Activated naive CD4-positive, alpha-beta T cell treated with anti-CD3 and anti-CD28 coated beads for 36 hours (primary cell): ENCODE measurements at regions of chr7 and their contacts with region 1.

Region 1: DNA sequence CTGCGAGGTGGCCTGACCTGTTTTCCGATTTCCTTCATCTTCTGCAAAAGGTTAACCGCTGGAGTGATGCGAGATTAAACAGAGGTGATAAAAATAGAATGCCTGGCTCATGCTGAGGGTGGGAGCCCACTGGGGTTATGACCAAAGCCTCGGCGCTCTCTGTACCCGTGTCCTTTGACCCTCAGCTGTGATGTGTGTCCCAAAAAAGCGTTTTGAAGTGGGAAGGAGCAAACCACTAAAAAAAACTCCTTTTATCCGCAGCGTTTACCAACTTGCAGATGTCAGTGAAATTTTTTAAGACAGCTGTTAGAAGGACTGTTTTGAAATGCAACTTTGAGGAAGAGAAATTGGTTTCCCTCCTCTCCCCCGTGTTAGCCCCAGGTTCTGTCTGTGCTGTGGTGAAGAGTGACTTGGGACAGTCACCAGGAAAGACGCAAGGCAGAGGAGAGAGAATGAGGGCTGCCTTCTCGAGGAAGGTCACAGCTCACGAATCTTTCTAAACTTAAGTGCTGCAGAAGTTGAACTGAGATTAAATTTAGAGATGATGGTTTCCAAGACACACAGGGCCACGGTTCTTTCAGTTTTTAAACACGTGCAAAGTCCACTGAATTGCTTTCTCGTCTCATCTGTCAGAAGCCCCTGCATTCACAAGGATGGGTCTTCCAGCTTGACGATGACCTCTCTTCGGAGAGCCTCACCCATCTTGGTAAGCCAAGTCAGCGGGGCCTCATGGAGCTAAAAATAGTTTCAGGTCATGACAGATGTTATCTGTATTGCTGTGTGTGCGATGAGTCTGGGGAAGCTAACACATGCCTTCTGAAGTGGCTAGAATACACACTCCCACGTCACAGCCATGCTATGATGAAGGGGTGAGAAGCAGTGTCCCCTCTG is 27.6 kb downstream of the AMZ1 start:
- DNase-seq: peak; percentile 72
- H3K4me3 Mint-ChIP-seq: no peak overlapping the region
- H3K27ac Mint-ChIP-seq: peak overlapping the region; percentile 37
- H3K4me1 Mint-ChIP-seq: peaks cover 68% of the 10 kb centered on the region
- H3K27me3 Mint-ChIP-seq: peaks cover 6% of the 10 kb centered on the region

Region 2: GRCh38 chr7:2190531-2190930 is 525.1 kb before region 1 on chr7:
- CTCF ChIA-PET with region 1: no interaction called
- intact Hi-C with region 1: no loop called
- DNase-seq: no peak
- H3K4me3 Mint-ChIP-seq: no peak overlapping the region
- H3K27ac Mint-ChIP-seq: no peak overlapping the region
- H3K4me1 Mint-ChIP-seq: no peaks in the 10 kb centered on the region
- H3K27me3 Mint-ChIP-seq: no peaks in the 10 kb centered on the region

Region 3: GRCh38 chr7:2670720-2671391 is 44.7 kb before region 1 on chr7:
- CTCF ChIA-PET with region 1: interaction called, 54 read pairs
- intact Hi-C with region 1: loop called (anchors 1 kb)
- DNase-seq: peak; percentile 81
- H3K4me3 Mint-ChIP-seq: no peak overlapping the region
- H3K27ac Mint-ChIP-seq: no peak overlapping the region
- H3K4me1 Mint-ChIP-seq: peaks cover 5% of the 10 kb centered on the region
- H3K27me3 Mint-ChIP-seq: peaks cover 12% of the 10 kb centered on the region

Region 4: DNA sequence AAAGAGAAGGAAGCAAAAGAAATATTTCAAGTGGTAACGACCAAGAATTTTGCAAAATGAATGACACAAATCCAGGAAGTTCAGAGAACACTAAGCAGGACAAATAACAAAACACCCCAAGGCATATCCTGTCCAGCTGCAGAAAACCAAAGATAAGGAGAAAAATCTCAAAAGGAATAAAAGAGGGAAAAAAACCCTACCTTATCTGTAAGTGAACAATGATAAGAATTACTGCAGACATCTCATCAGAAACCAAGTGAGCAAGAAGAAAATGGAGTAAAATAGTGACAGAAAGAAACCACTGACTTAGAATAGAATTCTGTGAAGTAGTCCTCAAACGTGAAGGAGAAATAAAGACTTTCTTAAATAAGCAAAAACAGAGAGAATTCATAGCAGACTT is 306.2 kb after region 1 on chr7:
- CTCF ChIA-PET with region 1: no interaction called
- intact Hi-C with region 1: no loop called
- DNase-seq: no peak
- H3K4me3 Mint-ChIP-seq: no peak overlapping the region
- H3K27ac Mint-ChIP-seq: no peak overlapping the region
- H3K4me1 Mint-ChIP-seq: peaks cover 33% of the 10 kb centered on the region
- H3K27me3 Mint-ChIP-seq: no peaks in the 10 kb centered on the region